ENCODE measurements at regions of chr7 and their contacts with region 1.

Region 1: DNA sequence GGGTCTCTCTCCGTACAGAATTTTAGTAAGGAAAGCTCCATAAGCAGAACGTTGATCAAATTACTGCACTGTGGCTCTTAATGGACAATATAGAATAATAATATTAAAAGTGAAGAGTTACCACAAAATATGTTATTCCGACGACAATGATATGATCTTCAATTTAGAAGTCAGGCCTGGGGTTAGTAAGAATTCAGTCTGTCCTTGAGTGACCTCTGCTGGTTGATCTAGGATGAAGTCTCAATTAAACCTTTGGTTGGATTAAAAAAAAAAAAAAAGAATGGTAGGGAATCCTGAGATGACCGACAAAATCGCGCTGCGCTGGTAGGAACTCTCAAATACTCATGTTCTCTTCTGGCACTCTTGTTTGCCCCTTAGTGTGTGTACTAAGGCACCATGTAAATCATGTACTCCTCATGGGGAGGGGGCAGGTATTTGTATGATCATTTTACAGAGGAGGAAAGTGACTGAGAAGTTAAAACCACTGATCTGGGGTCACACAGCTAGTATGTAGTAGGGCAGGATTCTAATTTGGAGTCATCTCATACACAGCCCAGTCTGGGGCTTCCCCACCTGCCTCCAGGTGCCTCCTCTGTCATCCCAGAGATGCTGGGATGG is 161.3 kb upstream of the NPVF start:
- DNase-seq: peak; percentile 19
- ATAC-seq: no peak
- H3K4me3 Mint-ChIP-seq: no peak overlapping the region
- H3K27ac Mint-ChIP-seq: no peak overlapping the region
- H3K4me1 Mint-ChIP-seq: no peaks in the 10 kb centered on the region
- H3K27me3 Mint-ChIP-seq: no peaks in the 10 kb centered on the region

Region 2: DNA sequence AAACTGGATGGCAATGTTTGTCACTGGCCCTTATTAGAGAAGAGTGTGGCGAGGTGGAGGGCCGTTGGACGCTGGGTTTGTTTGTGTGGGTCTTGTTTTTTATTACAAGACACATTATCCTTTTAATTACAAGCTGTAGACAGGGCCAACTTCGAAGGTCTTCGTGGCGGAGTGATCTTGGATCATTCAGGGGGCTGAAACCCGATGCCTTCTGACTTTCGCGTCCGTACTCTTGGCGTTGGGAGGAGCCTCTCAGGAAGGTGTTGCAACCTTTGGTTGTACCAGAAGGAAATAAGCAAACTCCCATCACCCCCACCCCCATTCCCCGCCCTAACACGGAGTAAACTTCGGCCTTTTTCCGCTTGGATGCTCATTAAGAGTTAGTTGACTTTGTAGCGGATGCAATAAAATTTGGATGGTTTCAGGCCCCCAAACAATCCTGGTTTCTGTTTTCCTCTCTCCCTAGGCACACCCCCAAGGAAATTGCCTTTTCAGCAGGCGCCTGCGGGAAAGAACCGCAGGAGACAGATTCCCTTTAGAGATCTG is 467.9 kb after region 1 on chr7:
- CTCF ChIA-PET with region 1: no interaction called
- POLR2A ChIA-PET with region 1: no interaction called
- intact Hi-C with region 1: loop called in 1 of 2 experiments (anchors 2 kb)
- DNase-seq: no peak
- ATAC-seq: no peak
- H3K4me3 Mint-ChIP-seq: no peak overlapping the region
- H3K27ac Mint-ChIP-seq: no peak overlapping the region
- H3K4me1 Mint-ChIP-seq: peaks cover 30% of the 10 kb centered on the region
- H3K27me3 Mint-ChIP-seq: peaks cover 39% of the 10 kb centered on the region